ENCODE measurements at regions of chr15 and their contacts with region 1.

Region 1: DNA sequence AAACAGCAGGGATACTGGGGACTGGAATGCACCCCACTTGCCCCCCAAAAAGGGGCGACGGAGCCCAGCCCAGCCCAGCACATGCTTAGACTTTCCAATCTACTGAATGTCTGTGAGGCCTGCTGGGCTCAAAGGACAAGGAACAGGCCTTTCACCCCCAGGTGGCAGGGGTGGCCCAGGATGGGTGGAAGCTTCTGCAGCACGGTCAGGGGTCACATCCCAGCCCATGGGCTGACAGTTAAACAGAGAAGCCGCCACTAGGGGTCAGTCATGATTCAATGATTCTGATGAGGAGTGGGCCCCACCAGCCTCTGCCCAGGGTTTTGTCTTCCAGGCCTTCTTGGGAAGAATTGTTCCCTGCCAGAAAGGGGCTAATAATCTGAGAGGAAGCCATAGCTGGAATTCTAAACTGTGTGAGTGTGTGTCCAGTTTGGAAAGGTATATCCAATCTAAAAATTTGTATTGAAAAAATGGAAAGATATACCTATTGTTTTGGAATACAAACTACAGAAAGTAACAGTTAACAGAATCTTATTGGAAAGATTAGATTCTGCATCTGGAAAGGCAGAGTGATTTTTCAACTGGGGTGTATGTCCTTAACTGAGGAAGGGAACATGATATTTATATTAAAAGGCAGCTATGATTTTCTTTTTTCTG is 2.2 kb downstream of the CHRNB4 start:
- DNase-seq: no peak
- ATAC-seq: peak in 1 of 2 donors; percentile 58
- H3K4me3 ChIP-seq: no peak overlapping the region
- H3K27ac ChIP-seq: no peak overlapping the region
- H3K4me1 ChIP-seq: peaks cover 0 to 8% of the 10 kb centered on the region in 2 donors
- H3K27me3 ChIP-seq: peaks cover 0 to 15% (median 13%) of the 10 kb centered on the region in 3 donors
- CTCF ChIP-seq: peak; percentile 33 to 66 (median 53)
- POLR2A ChIP-seq: no peak

Region 2: GRCh38 chr15:78709263-78709882 is 70.6 kb after region 1 on chr15:
- in situ Hi-C with region 1: no loop called
- intact Hi-C with region 1: loop called (anchors 1 kb)
- DNase-seq: peak; percentile 34 to 47
- ATAC-seq: peak; percentile 70 to 89
- H3K4me3 ChIP-seq: no peak overlapping the region
- H3K27ac ChIP-seq: no peak overlapping the region
- H3K4me1 ChIP-seq: no peaks in the 10 kb centered on the region
- H3K27me3 ChIP-seq: no peaks in the 10 kb centered on the region
- CTCF ChIP-seq: peak; percentile 75 to 95 (median 85)
- POLR2A ChIP-seq: no peak

Region 3: DNA sequence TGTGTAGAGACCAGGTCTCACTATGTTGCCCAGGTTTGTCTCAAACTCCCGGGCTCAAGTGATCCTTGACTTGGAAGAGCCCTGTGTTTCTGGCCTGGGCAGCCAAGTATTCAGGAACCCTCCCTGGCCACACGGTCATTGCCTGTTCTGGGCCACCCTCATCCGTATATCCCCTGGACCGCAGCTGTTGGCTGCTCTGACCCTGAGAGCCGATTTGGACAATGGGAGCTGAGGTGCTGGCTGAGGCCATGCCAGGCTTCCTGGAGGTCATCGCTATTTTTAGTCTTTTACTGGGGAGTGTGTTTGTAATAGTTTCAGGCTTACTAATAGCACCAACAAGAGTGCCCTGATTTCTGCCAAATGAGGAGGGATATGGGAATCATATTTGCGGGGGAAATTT is 111.8 kb after region 1 on chr15:
- in situ Hi-C with region 1: no loop called
- intact Hi-C with region 1: loop called (anchors 5 kb)
- DNase-seq: peak in 1 of 2 donors; percentile 73
- ATAC-seq: peak; percentile 88 to 89
- H3K4me3 ChIP-seq: peak overlapping the region; percentile 39 to 50 (median 42)
- H3K27ac ChIP-seq: peak overlapping the region; percentile 81 to 89 (median 86)
- H3K4me1 ChIP-seq: peaks cover 15 to 20% of the 10 kb centered on the region in 2 donors
- H3K27me3 ChIP-seq: no peaks in the 10 kb centered on the region
- CTCF ChIP-seq: no peak
- POLR2A ChIP-seq: peak in 1 of 2 donors; percentile 8

Measured in gastrocnemius medialis (tissue), 4 donors.